Activated CD4-positive, alpha-beta T cell treated with anti-CD3 and anti-CD28 coated beads, Interleukin-2, amount 10 ng/mL, durations not matched to agents 7 days and 5 days (primary cell): ENCODE measurements at regions of chr4 and their contacts with region 1.

Region 1: GRCh38 chr4:36255577-36255976 is 11.3 kb upstream of the ARAP2 start:
- DNase-seq: peak; percentile 86
- H3K4me3 Mint-ChIP-seq: peak overlapping the region; percentile 61
- H3K27ac Mint-ChIP-seq: peak overlapping the region; percentile 94
- H3K4me1 Mint-ChIP-seq: peaks cover 42% of the 10 kb centered on the region
- H3K27me3 Mint-ChIP-seq: no peaks in the 10 kb centered on the region

Region 2: GRCh38 chr4:36244257-36245079 is 11.1 kb before region 1 on chr4 and contains the start of gene ARAP2:
- CTCF ChIA-PET with region 1: interaction called, 11 read pairs
- POLR2A ChIA-PET with region 1: interaction called, 5 read pairs
- DNase-seq: peak; percentile 65
- H3K4me3 Mint-ChIP-seq: peak within 1 kb of the TSS; percentile 98
- H3K27ac Mint-ChIP-seq: peak within 1 kb of the TSS; percentile 95
- H3K4me1 Mint-ChIP-seq: peaks cover 39% of the 10 kb centered on the region
- H3K27me3 Mint-ChIP-seq: peaks cover 8% of the 10 kb centered on the region
- total RNA-seq, gene ARAP2: 35.8 to 49.7 TPM

Region 3: DNA sequence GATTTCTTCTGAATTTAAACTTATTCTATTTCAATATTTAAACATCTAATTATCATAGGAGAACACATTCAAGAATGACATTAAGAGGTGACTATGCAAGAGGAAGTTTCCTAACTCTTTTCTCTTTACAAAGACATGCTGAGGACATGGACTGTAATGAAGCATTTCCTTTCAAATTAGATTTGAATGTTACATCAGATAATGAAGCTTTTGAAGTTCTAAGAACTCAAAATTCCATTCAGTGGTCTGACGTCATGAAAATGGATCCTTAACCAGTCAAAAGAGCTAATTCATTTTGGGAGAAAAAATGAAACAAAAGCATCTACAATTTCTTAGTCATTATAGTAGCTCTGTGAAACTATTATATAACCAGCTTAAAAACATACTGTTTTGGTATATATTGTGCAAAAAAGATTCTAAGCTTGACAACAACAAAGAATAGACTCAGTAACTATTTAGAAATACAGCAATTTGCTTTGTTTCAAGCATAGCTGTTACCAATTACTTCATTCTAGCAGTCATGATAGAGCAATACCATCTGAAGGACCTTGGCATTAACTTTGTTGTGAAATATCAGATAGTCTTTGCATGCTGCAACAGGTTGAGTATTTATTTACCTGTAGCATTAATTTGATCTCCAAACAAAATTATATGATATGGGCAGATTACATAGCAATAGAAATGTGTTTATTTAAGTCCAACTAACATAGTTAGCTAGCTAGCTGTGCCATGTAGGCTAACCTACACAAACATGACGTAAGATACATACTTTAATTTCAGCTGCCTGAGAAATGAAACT is 12.1 kb after region 1 on chr4:
- CTCF ChIA-PET with region 1: interaction called, 10 read pairs
- POLR2A ChIA-PET with region 1: no interaction called
- DNase-seq: no peak
- H3K4me3 Mint-ChIP-seq: no peak overlapping the region
- H3K27ac Mint-ChIP-seq: peak overlapping the region; percentile 41
- H3K4me1 Mint-ChIP-seq: peaks cover 35% of the 10 kb centered on the region
- H3K27me3 Mint-ChIP-seq: no peaks in the 10 kb centered on the region